WTC11 (cell line): ENCODE measurements at regions of chr3 and their contacts with region 1.

Region 1: DNA sequence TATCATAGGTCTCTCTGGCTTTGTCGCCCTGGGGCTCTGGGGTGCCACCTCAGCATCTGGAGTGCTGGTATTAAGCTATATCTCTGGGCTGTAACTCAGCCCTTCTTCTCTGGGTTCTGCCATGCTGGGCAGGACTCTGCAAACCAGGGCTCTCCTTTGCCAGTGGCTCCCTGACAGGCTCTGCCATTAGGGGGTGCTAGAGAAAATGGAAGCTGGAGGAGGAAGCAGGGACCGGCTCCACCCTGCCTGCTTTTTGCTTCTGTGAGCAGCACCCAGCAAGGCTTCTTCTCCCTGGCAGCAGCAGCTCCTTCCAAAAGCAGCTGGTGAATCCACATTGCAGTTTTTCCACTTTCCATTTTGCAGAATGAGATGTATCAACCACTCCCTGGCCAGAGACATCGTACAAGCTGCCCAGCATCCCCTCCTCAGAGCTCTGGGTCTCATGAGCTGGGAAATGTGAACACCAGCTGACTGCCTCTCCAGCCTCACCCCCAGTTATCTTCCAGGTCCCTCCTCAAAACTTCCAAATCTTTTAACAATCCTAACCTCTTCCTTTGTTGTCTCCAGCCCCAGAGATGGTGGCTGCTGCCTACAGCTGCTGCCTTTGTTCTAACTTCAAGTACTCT is 165.0 kb downstream of the ABHD5 start:
- DNase-seq: peak; percentile 82
- ATAC-seq: peak; percentile 90
- H3K4me3 Mint-ChIP-seq: no peak overlapping the region
- H3K27ac Mint-ChIP-seq: no peak overlapping the region
- H3K4me1 Mint-ChIP-seq: peaks cover 40% of the 10 kb centered on the region
- H3K27me3 Mint-ChIP-seq: 0 out of 2 replicates have a peak, but pooled peaks cover 6% of the 10 kb centered on the region
- CTCF ChIP-seq: no peak; the same call in 1 of the 2 replicates

Region 2: GRCh38 chr3:43690400-43691119 is 165.2 kb before region 1 on chr3 and contains the start of gene ABHD5:
- CTCF ChIA-PET with region 1: no interaction called
- POLR2A ChIA-PET with region 1: no interaction called
- DNase-seq: peak; percentile 87
- ATAC-seq: peak; percentile 79
- H3K4me3 Mint-ChIP-seq: peak within 1 kb of the TSS; percentile 89
- H3K27ac Mint-ChIP-seq: peak within 1 kb of the TSS; percentile 99
- H3K4me1 Mint-ChIP-seq: peaks cover 44% of the 10 kb centered on the region
- H3K27me3 Mint-ChIP-seq: peaks cover 5% of the 10 kb centered on the region
- CTCF ChIP-seq: no peak
- total RNA-seq, gene ABHD5: 9.5 to 11.3 TPM (median 10.9 TPM) in 3 replicates

Region 3: DNA sequence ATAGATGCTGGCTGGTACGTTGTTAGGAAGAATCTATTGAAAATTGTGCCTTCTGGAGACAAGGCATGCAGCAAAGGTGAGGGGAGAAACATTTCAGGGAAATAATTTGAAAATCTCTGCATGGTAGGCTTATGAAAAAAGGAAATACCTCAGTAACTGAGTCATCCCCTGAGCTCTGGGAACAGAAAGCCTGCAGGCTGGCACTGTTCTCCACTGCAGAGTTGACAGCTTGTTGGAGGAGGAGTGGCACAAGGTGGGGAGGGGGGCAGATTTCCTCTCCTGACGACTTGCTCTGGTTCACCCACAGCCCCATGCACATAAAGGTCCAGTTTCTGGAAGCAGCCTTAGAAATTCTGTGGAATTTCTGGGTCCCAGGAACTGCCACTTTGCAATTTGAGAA is 14.3 kb after region 1 on chr3:
- CTCF ChIA-PET with region 1: interaction called, 21 read pairs
- POLR2A ChIA-PET with region 1: no interaction called
- DNase-seq: no peak
- ATAC-seq: no peak
- H3K4me3 Mint-ChIP-seq: no peak overlapping the region
- H3K27ac Mint-ChIP-seq: no peak overlapping the region
- H3K4me1 Mint-ChIP-seq: peaks cover 27% of the 10 kb centered on the region
- H3K27me3 Mint-ChIP-seq: peaks cover 5% of the 10 kb centered on the region; the same call in 1 of the 2 replicates
- CTCF ChIP-seq: no peak

Region 4: GRCh38 chr3:43885908-43886618 is 30.3 kb after region 1 on chr3:
- CTCF ChIA-PET with region 1: interaction called, 14 read pairs
- POLR2A ChIA-PET with region 1: no interaction called
- DNase-seq: no peak
- ATAC-seq: no peak
- H3K4me3 Mint-ChIP-seq: no peak overlapping the region
- H3K27ac Mint-ChIP-seq: no peak overlapping the region
- H3K4me1 Mint-ChIP-seq: peaks cover 14% of the 10 kb centered on the region
- H3K27me3 Mint-ChIP-seq: no peaks in the 10 kb centered on the region; the same call in 1 of the 2 replicates
- CTCF ChIP-seq: no peak

Region 5: DNA sequence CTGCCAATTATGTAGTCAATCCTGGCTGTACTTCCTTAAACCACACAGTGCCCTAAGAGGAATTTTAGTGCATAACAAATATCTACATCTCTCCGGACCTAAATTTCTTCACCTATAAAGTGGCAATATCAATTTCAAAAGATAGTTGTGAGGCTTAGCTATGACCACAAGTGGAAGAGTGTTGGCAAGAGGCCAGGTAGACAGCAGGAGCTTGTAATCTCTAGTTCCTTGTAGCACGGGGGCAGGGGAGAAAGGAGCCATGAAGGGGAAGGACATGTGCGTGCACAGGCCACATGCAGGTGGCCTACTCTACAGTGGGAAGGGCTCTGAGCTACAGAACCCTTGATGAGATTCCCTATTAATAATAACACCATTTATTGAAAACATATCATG is 104.7 kb after region 1 on chr3:
- CTCF ChIA-PET with region 1: interaction called, 10 read pairs
- POLR2A ChIA-PET with region 1: no interaction called
- DNase-seq: no peak
- ATAC-seq: no peak
- H3K4me3 Mint-ChIP-seq: no peak overlapping the region
- H3K27ac Mint-ChIP-seq: no peak overlapping the region
- H3K4me1 Mint-ChIP-seq: peaks cover 44% of the 10 kb centered on the region
- H3K27me3 Mint-ChIP-seq: no peaks in the 10 kb centered on the region; the same call in none of the 2 replicates
- CTCF ChIP-seq: no peak

Region 6: GRCh38 chr3:44077246-44077645 is 221.5 kb after region 1 on chr3:
- CTCF ChIA-PET with region 1: interaction called, 12 read pairs
- POLR2A ChIA-PET with region 1: no interaction called
- DNase-seq: no peak
- ATAC-seq: peak; percentile 59
- H3K4me3 Mint-ChIP-seq: no peak overlapping the region
- H3K27ac Mint-ChIP-seq: no peak overlapping the region; the same call in 1 of the 2 replicates
- H3K4me1 Mint-ChIP-seq: peaks cover 43% of the 10 kb centered on the region
- H3K27me3 Mint-ChIP-seq: no peaks in the 10 kb centered on the region; the same call in 1 of the 2 replicates
- CTCF ChIP-seq: no peak